Naive thymus-derived CD8-positive, alpha-beta T cell (primary cell): ENCODE measurements at regions of chr22 and their contacts with region 1.

Region 1: GRCh38 chr22:39520054-39520891 is at the start of gene ATF4:
- DNase-seq: peak; percentile 89 to 99 (median 96)
- ATAC-seq: peak; percentile 92 to 95
- H3K4me3 Mint-ChIP-seq: peak within 1 kb of the TSS; percentile 87 to 100 (median 98)
- H3K27ac Mint-ChIP-seq: peak within 1 kb of the TSS; percentile 91 to 100 (median 99)
- H3K4me1 Mint-ChIP-seq: peaks cover 18 to 61% (median 49%) of the 10 kb centered on the region in 4 donors
- H3K27me3 Mint-ChIP-seq: peaks cover 0 to 4% (median 0%) of the 10 kb centered on the region in 5 donors
- polyA plus RNA-seq, gene ATF4: 51.9 to 122 (median 61.0) TPM

Region 2: GRCh38 chr22:39349506-39349966 is 170.7 kb before region 1 on chr22:
- POLR2A ChIA-PET with region 1: interaction called, 17 read pairs
- DNase-seq: peak; percentile 17 to 73 (median 49)
- ATAC-seq: peak; percentile 50 to 61
- H3K4me3 Mint-ChIP-seq: peak overlapping the region; percentile 84 to 94 (median 90)
- H3K27ac Mint-ChIP-seq: peak overlapping the region; percentile 59 to 95 (median 89)
- H3K4me1 Mint-ChIP-seq: peaks cover 7 to 40% (median 26%) of the 10 kb centered on the region in 4 donors
- H3K27me3 Mint-ChIP-seq: peaks cover 0 to 3% (median 2%) of the 10 kb centered on the region in 5 donors

Region 3: DNA sequence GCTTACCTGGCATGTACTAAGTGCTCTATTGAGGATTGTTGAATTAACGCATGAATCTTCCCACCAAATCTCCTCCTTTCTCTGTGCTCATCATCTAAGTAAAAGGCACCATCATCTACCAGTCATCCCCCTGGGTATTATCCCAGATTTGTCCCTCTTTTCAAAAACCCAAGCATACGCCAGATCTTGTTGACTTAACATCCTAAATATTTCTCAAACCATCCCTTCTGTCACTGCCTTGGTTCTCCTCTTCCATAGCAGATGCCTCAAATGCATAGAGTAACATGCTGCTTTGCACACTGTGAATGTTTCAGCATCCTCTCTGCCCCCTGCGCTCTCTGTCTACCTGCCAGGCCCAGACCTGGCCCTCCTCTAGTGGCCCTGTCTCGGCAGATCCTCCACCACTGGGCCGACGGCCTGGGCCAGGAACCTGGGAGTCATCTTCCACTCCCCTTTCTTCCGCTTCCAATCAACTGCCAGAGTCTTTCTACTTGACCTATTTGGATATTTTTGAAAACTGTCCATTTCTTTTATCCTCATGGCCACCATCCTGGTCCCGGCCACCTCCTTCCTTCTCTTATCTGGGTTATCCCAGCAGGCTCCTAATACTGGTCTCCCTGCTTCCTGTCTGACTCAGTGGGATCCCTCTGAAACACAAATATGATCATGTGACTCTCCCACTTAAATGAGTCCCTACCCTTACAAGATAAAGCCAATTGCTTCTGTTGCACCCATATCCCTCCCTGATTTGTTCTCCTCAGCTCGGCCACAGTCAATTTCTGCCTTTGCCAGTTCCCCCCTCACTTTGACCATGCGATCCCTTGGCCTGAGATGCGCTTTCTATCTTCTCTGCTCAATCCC is 124.1 kb before region 1 on chr22:
- POLR2A ChIA-PET with region 1: interaction called, 49 read pairs
- DNase-seq: no peak
- ATAC-seq: no peak
- H3K4me3 Mint-ChIP-seq: peak overlapping the region in 2 of 10 donors; percentile 20 to 21
- H3K27ac Mint-ChIP-seq: peak overlapping the region in 3 of 10 donors; percentile 17 to 48 (median 35)
- H3K4me1 Mint-ChIP-seq: peaks cover under 1 to 11% (median 7%) of the 10 kb centered on the region in 4 donors
- H3K27me3 Mint-ChIP-seq: no peaks in the 10 kb centered on the region

Region 4: GRCh38 chr22:39414886-39415285 is 105.4 kb before region 1 on chr22:
- POLR2A ChIA-PET with region 1: interaction called, 20 read pairs
- DNase-seq: no peak
- ATAC-seq: no peak
- H3K4me3 Mint-ChIP-seq: peak overlapping the region in 9 of 10 donors; percentile 58 to 86 (median 75)
- H3K27ac Mint-ChIP-seq: peak overlapping the region; percentile 72 to 95 (median 82)
- H3K4me1 Mint-ChIP-seq: peaks cover 37 to 87% (median 66%) of the 10 kb centered on the region in 4 donors
- H3K27me3 Mint-ChIP-seq: no peaks in the 10 kb centered on the region

Region 5: GRCh38 chr22:39490135-39490798 is 30.0 kb before region 1 on chr22:
- POLR2A ChIA-PET with region 1: interaction called, 12 read pairs
- DNase-seq: peak; percentile 52 to 88 (median 75)
- ATAC-seq: peak; percentile 100
- H3K4me3 Mint-ChIP-seq: peak overlapping the region in 4 of 10 donors; percentile 51 to 81 (median 71)
- H3K27ac Mint-ChIP-seq: peak overlapping the region in 5 of 10 donors; percentile 25 to 82 (median 59)
- H3K4me1 Mint-ChIP-seq: peaks cover 9 to 16% (median 14%) of the 10 kb centered on the region in 4 donors
- H3K27me3 Mint-ChIP-seq: no peaks in the 10 kb centered on the region

Region 6: DNA sequence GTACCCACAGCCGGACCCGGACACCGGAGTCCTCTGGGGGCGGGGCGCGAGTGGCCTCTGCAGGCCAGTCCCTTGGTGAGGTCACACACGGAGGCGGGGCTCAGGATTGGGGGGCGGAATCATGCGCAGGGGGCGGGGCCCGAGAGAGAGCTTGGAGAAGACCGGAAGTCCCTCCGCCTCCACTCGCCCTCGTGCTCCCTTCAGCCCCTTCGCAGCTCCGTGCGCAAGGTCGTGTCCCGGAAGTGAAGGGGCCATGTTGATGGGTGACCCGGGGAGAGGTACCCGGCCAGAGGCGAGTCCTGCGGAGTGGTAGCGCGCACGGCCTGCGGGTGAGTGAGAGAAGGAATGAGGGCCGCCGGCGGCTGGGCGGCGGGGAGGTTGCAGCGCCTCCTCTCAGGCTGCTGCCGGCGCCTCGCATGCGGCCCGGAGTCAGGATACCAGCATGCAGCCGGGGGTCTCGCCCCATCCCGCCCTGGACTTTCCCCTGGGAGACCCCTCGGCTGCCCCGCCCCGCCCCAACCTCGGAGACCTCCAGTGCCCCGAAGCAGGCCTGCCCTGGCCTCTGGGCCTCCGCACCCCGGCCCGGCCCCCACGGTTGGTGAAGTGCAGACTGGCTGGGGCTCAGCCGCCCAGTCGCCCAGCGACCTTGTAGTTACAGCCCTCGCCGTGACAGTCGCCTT is 18.0 kb before region 1 on chr22 and contains the start of gene MIEF1:
- POLR2A ChIA-PET with region 1: interaction called, 72 read pairs
- DNase-seq: peak; percentile 76 to 93 (median 80)
- ATAC-seq: peak; percentile 95 to 96
- H3K4me3 Mint-ChIP-seq: peak within 1 kb of the TSS; percentile 83 to 99 (median 97)
- H3K27ac Mint-ChIP-seq: peak within 1 kb of the TSS; percentile 87 to 98 (median 95)
- H3K4me1 Mint-ChIP-seq: peaks cover 24 to 50% (median 46%) of the 10 kb centered on the region in 4 donors
- H3K27me3 Mint-ChIP-seq: no peaks in the 10 kb centered on the region
- polyA plus RNA-seq, gene MIEF1: 22.2 to 35.8 (median 25.9) TPM

Region 7: GRCh38 chr22:39532215-39533071 is 12.2 kb after region 1 on chr22 and contains the start of gene RPS19BP1:
- POLR2A ChIA-PET with region 1: interaction called, 135 read pairs
- DNase-seq: peak; percentile 93 to 100 (median 99)
- ATAC-seq: peak; percentile 87 to 88
- H3K4me3 Mint-ChIP-seq: peak within 1 kb of the TSS; percentile 90 to 99 (median 97)
- H3K27ac Mint-ChIP-seq: peak within 1 kb of the TSS; percentile 89 to 98 (median 96)
- H3K4me1 Mint-ChIP-seq: peaks cover 27 to 63% (median 56%) of the 10 kb centered on the region in 4 donors
- H3K27me3 Mint-ChIP-seq: peaks cover 0 to 1% (median 0%) of the 10 kb centered on the region in 5 donors
- polyA plus RNA-seq, gene RPS19BP1: 122 to 129 (median 128) TPM